H1 (cell line): ENCODE measurements at regions of chr4 and their contacts with region 1.

Region 1: DNA sequence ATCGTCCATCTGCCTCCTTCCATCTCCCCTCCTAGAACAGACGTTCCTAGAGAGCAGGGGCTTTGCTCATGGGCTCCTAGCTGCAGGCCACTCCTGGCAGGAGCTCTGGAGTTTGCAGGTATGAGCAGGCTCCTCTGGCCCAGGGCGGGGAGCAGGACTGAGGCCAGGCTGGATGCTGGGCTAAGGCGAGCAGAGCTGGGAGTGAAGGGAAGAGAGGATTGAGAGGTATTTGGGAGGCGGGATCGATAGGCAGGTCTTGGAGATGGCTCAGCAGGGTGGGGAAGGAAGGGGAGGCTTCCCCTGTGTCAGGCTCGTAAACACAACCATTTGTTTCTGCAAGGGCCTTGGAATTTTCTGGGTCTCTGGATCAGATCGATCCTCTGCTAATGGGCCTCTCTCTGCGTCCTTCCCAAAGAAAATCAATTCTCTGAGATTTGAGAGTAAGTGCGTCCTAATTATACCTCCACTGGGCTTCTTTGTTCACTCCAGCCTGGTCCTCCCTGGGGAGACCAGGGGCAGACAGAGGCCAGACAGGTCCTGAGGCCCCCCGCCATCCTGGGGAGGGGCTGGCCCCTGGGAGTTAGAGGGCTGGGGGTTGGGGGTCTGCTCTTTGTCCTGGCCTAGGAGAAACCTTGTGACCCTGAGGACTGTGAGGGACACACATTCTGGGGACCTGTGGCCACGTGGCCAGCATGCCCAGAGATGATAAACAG is 94.8 kb upstream of the PSAPL1 start:
- DNase-seq: no peak
- H3K4me3 ChIP-seq: no peak overlapping the region
- H3K27ac ChIP-seq: no peak overlapping the region
- H3K4me1 ChIP-seq: peaks cover 4 to 26% (median 15%) of the 10 kb centered on the region in 4 experiments
- H3K27me3 ChIP-seq: no peaks in the 10 kb centered on the region
- CTCF ChIP-seq: no peak
- EP300 ChIP-seq: no peak
- POLR2A ChIP-seq: no peak
- RAD21 ChIP-seq: no peak

Region 2: DNA sequence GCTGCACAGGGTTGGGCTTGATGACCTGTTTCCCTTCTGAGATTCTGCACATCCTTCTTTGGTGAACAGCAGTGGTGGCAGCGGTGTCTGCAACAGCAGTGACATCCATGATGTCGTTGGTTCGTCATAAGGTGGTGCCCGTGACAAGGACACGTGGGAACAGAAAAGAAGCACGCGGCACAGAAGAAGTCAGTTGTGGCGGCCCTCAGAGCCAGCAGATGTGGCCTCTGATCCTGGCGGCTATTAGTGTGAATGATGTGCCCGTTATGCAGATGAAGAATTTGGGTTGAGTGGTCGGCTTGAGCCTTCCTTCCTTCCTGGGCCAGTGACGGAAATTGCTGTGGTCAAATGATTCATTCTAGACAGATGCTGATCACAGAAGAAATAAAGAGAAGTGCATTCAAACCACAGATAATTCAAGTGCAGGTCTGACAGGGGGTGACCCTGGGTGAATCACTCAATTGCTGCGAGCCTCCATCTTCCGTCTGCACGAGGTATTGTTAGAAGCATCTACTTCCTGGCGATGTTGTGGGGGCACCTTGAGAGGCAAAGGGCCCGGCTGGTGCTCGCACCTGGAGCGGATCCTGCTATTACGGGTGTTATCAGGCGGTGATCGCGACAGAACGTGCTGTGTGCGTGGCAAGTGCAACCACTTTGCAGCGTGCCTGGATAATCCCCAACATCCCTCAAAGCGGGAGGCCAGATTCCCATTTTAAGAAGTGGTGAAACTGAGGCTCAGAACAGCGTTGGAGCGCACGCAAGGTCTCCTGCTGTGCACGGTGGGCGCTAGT is 120.4 kb after region 1 on chr4:
- CTCF ChIA-PET with region 1: interaction called, 16 read pairs
- POLR2A ChIA-PET with region 1: no interaction called
- DNase-seq: no peak
- H3K4me3 ChIP-seq: no peak overlapping the region
- H3K27ac ChIP-seq: no peak overlapping the region
- H3K4me1 ChIP-seq: peaks cover 0 to 14% (median 12%) of the 10 kb centered on the region in 4 experiments; a peak in 6 of 7 replicates
- H3K27me3 ChIP-seq: no peaks in the 10 kb centered on the region
- CTCF ChIP-seq: no peak
- EP300 ChIP-seq: no peak
- POLR2A ChIP-seq: no peak
- RAD21 ChIP-seq: no peak

Region 3: GRCh38 chr4:7719354-7720174 is 190.0 kb after region 1 on chr4:
- CTCF ChIA-PET with region 1: interaction called, 10 read pairs
- POLR2A ChIA-PET with region 1: no interaction called
- DNase-seq: peak; percentile 25 to 96
- H3K4me3 ChIP-seq: peak overlapping the region in 1 of 4 experiments; percentile 17; a peak in 1 of 8 replicates
- H3K27ac ChIP-seq: no peak overlapping the region
- H3K4me1 ChIP-seq: peaks cover 0 to 2% (median 0%) of the 10 kb centered on the region in 4 experiments; a peak in 2 of 7 replicates
- H3K27me3 ChIP-seq: peaks cover 0 to 4% (median 2%) of the 10 kb centered on the region in 4 experiments; a peak in 3 of 7 replicates
- CTCF ChIP-seq: peak in 2 of 3 experiments; percentile 78 to 85; a peak in 3 of 4 replicates
- EP300 ChIP-seq: no peak; a peak in 1 of 3 replicates
- POLR2A ChIP-seq: no peak
- RAD21 ChIP-seq: peak; percentile 85 to 92